HCT116 (cell line): ENCODE measurements at regions of chr6 and their contacts with region 1.

Region 1: GRCh38 chr6:87393022-87393622 is 14.7 kb upstream of the CFAP206 start:
- DNase-seq: peak; percentile 62
- ATAC-seq: peak; percentile 90
- H3K4me3 ChIP-seq: no peak overlapping the region
- H3K27ac ChIP-seq: no peak overlapping the region
- H3K4me1 ChIP-seq: no peaks in the 10 kb centered on the region
- H3K27me3 ChIP-seq: no peaks in the 10 kb centered on the region
- CTCF ChIP-seq: peak; percentile 57 to 79 (median 60)
- POLR2A ChIP-seq: no peak
- RAD21 ChIP-seq: peak; percentile 88

Region 2: DNA sequence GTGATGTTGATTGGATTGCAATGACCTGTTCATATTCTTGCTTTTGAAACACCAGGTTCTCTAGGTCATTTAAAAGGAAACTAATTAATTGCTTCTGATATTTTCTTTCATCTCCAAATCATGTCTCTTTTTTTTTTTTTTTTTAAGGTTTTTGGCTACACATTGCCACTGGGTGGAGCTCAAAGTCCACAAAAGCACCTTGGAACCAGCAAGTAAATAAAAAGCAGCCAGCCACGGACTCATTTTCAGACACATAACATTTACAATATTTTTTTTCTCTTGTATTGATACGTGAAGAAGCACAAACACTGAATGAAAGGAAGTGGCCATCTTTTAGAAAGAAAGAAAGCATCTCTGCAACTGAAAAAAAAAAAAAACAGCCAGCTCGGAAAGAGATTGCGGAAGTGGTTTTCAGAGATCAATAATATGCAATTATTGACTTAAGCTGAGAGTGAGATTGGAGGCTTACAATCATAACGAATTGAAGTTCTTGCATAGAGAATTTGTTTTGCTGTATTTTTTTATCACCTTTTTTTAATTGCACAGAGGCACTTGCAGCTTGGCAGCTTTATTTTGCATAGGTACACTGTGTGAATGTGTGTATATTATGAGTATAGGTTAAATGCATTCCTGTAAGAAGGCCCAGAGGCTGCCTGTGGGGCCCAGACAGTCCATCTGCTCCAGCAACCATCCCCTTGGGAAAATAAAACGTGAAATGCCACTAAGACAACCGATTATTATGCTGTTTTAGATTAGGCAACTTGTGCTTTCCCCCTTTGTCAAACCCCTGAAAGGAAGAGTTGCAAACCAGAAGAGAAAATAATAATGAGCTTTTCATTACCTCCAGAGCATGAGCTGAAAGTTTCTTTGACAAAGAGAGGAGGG is 326.4 kb before region 1 on chr6:
- CTCF ChIA-PET with region 1: interaction called, 3 read pairs
- POLR2A ChIA-PET with region 1: no interaction called
- RAD21 ChIA-PET with region 1: interaction called in 1 of 2 experiments, 3 read pairs
- intact Hi-C with region 1: loop called (anchors 1 kb)
- DNase-seq: peak; percentile 57
- ATAC-seq: no peak
- H3K4me3 ChIP-seq: no peak overlapping the region
- H3K27ac ChIP-seq: no peak overlapping the region
- H3K4me1 ChIP-seq: no peaks in the 10 kb centered on the region
- H3K27me3 ChIP-seq: peaks cover 20% of the 10 kb centered on the region
- CTCF ChIP-seq: peak; percentile 38 to 78 (median 56); a peak in 4 of 6 replicates
- POLR2A ChIP-seq: no peak
- RAD21 ChIP-seq: peak; percentile 80

Region 3: GRCh38 chr6:87277123-87277522 is 116.0 kb before region 1 on chr6:
- CTCF ChIA-PET with region 1: interaction called, 4 read pairs
- POLR2A ChIA-PET with region 1: no interaction called
- RAD21 ChIA-PET with region 1: no interaction called
- intact Hi-C with region 1: loop called (anchors 1 kb)
- DNase-seq: no peak
- ATAC-seq: peak; percentile 80
- H3K4me3 ChIP-seq: no peak overlapping the region
- H3K27ac ChIP-seq: no peak overlapping the region
- H3K4me1 ChIP-seq: no peaks in the 10 kb centered on the region
- H3K27me3 ChIP-seq: no peaks in the 10 kb centered on the region
- CTCF ChIP-seq: peak; percentile 27 to 52 (median 30); a peak in 4 of 6 replicates
- POLR2A ChIP-seq: no peak
- RAD21 ChIP-seq: peak; percentile 61

Region 4: DNA sequence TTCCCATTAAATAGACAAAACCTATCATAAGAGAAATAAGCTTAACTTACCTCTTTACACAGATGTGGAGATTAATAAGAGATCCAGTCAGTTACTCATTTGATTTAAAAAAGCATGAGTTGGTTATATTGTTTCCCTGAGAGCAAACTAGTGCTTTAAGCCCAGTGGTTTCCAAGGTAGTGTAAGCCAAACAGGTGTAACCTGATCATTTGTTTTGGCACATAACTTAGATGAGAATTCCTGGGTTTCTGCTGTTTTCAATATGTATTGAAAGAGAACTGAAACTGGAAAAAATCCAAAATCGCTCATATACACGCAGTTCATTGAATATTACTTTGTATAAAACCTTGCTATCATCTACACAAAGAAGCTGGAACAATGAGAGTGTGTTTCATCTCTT is 101.2 kb before region 1 on chr6:
- CTCF ChIA-PET with region 1: no interaction called
- POLR2A ChIA-PET with region 1: no interaction called
- RAD21 ChIA-PET with region 1: no interaction called
- intact Hi-C with region 1: no loop called
- DNase-seq: no peak
- ATAC-seq: no peak
- H3K4me3 ChIP-seq: no peak overlapping the region
- H3K27ac ChIP-seq: no peak overlapping the region
- H3K4me1 ChIP-seq: no peaks in the 10 kb centered on the region
- H3K27me3 ChIP-seq: no peaks in the 10 kb centered on the region
- CTCF ChIP-seq: no peak
- POLR2A ChIP-seq: no peak
- RAD21 ChIP-seq: no peak

Region 5: GRCh38 chr6:87772597-87773530 is 379.7 kb after region 1 on chr6:
- CTCF ChIA-PET with region 1: no interaction called
- POLR2A ChIA-PET with region 1: no interaction called
- RAD21 ChIA-PET with region 1: no interaction called
- intact Hi-C with region 1: no loop called
- DNase-seq: no peak
- ATAC-seq: no peak
- H3K4me3 ChIP-seq: no peak overlapping the region
- H3K27ac ChIP-seq: no peak overlapping the region
- H3K4me1 ChIP-seq: no peaks in the 10 kb centered on the region
- H3K27me3 ChIP-seq: no peaks in the 10 kb centered on the region
- CTCF ChIP-seq: no peak
- POLR2A ChIP-seq: no peak
- RAD21 ChIP-seq: no peak

Region 6: GRCh38 chr6:87929843-87930288 is 536.7 kb after region 1 on chr6:
- CTCF ChIA-PET with region 1: no interaction called
- POLR2A ChIA-PET with region 1: no interaction called
- RAD21 ChIA-PET with region 1: no interaction called
- intact Hi-C with region 1: loop called (anchors 10 kb)
- DNase-seq: peak; percentile 71
- ATAC-seq: peak; percentile 100
- H3K4me3 ChIP-seq: no peak overlapping the region
- H3K27ac ChIP-seq: no peak overlapping the region
- H3K4me1 ChIP-seq: peaks cover 0 to 6% of the 10 kb centered on the region in 2 experiments; a peak in 1 of 4 replicates
- H3K27me3 ChIP-seq: peaks cover 8% of the 10 kb centered on the region; the same call in 1 of the 2 replicates
- CTCF ChIP-seq: peak; percentile 77 to 91 (median 85); a peak in 5 of 6 replicates
- POLR2A ChIP-seq: no peak
- RAD21 ChIP-seq: peak; percentile 92

Region 7: GRCh38 chr6:88183471-88183870 is 790.3 kb after region 1 on chr6:
- CTCF ChIA-PET with region 1: no interaction called
- POLR2A ChIA-PET with region 1: no interaction called
- RAD21 ChIA-PET with region 1: no interaction called
- intact Hi-C with region 1: no loop called
- DNase-seq: no peak
- ATAC-seq: no peak
- H3K4me3 ChIP-seq: no peak overlapping the region
- H3K27ac ChIP-seq: no peak overlapping the region
- H3K4me1 ChIP-seq: no peaks in the 10 kb centered on the region
- H3K27me3 ChIP-seq: peaks cover 21% of the 10 kb centered on the region
- CTCF ChIP-seq: no peak
- POLR2A ChIP-seq: no peak
- RAD21 ChIP-seq: no peak

Region 8: GRCh38 chr6:88870717-88871330 is 1477.7 kb after region 1 on chr6:
- CTCF ChIA-PET with region 1: no interaction called
- POLR2A ChIA-PET with region 1: no interaction called
- RAD21 ChIA-PET with region 1: no interaction called
- intact Hi-C with region 1: loop called (anchors 5 kb)
- DNase-seq: peak; percentile 29
- ATAC-seq: peak; percentile 54; the same call in 1 of the 2 replicates
- H3K4me3 ChIP-seq: no peak overlapping the region
- H3K27ac ChIP-seq: no peak overlapping the region
- H3K4me1 ChIP-seq: peaks cover 0 to 8% of the 10 kb centered on the region in 2 experiments; a peak in 2 of 4 replicates
- H3K27me3 ChIP-seq: no peaks in the 10 kb centered on the region
- CTCF ChIP-seq: peak; percentile 33 to 68 (median 43); a peak in 3 of 6 replicates
- POLR2A ChIP-seq: no peak
- RAD21 ChIP-seq: peak; percentile 74